ENCODE measurements at regions of chr4 and their contacts with region 1.

Region 1: DNA sequence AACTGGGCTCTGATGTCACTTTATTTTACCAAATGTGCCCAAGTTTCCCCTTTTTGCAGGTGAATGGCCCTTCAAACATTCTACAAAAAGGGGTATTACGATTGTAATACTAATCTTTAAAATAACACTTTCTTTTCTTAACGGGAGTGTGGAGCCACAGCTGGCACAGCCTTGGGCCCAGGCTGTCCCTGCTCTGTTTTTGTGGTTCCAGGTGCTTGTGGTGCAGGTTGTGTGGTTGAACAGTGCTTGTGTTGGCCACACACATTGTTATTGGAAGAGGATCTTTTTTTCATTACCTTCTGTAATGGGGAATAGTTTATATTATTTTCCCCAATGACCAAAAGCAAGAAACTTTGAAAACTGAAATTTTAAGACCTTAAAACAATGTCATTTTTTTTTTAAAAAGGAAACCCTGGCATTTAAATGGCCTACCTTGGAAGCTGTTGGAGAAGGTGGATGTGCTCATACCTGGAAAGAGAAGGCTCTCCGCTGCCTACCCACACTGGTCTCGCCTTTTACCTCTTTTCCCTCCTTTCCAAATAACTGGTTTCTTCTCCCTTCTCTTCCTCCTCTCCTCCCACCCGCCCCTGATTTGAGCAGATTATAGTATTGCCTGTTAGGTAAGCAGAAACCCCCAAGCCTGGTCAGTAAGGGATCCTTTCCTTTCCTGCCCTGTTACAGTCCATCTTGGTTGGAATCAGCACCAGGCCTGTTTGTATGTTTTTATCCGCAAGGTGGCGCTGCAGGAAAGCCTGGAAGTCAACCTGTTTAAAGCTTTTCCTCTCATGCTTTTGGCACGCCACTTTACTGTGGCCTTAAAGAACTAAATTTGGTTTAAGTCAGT is 28.6 kb downstream of the HADH start:
- DNase-seq: peak; percentile 61 to 90 (median 81)
- ATAC-seq: peak; percentile 88
- H3K4me3 ChIP-seq: no peak overlapping the region
- H3K4me3 Mint-ChIP-seq: no peak overlapping the region
- H3K27ac ChIP-seq: no peak overlapping the region
- H3K27ac Mint-ChIP-seq: no peak overlapping the region
- H3K4me1 ChIP-seq: peaks cover 4% of the 10 kb centered on the region
- H3K4me1 Mint-ChIP-seq: peaks cover 15% of the 10 kb centered on the region
- H3K27me3 ChIP-seq: no peaks in the 10 kb centered on the region
- H3K27me3 Mint-ChIP-seq: no peaks in the 10 kb centered on the region
- CTCF ChIP-seq: peak; percentile 82

Region 2: GRCh38 chr4:108045694-108046038 is 27.4 kb after region 1 on chr4:
- CTCF ChIA-PET with region 1: interaction called, 10 read pairs
- POLR2A ChIA-PET with region 1: no interaction called
- intact Hi-C with region 1: no loop called
- DNase-seq: peak in 3 of 9 experiments; percentile 36 to 69 (median 50)
- ATAC-seq: peak; percentile 27
- H3K4me3 ChIP-seq: no peak overlapping the region
- H3K4me3 Mint-ChIP-seq: no peak overlapping the region
- H3K27ac ChIP-seq: peak overlapping the region; percentile 16 to 17
- H3K27ac Mint-ChIP-seq: peak overlapping the region; percentile 81
- H3K4me1 ChIP-seq: peaks cover 69% of the 10 kb centered on the region
- H3K4me1 Mint-ChIP-seq: peaks cover 66% of the 10 kb centered on the region
- H3K27me3 ChIP-seq: no peaks in the 10 kb centered on the region
- H3K27me3 Mint-ChIP-seq: no peaks in the 10 kb centered on the region
- CTCF ChIP-seq: no peak

Region 3: GRCh38 chr4:108492816-108493595 is 474.7 kb after region 1 on chr4:
- CTCF ChIA-PET with region 1: interaction called, 5 read pairs
- POLR2A ChIA-PET with region 1: no interaction called
- intact Hi-C with region 1: loop called in 1 of 2 experiments (anchors 1 kb)
- DNase-seq: peak in 5 of 9 experiments; percentile 15 to 58 (median 38)
- ATAC-seq: no peak
- H3K4me3 ChIP-seq: no peak overlapping the region
- H3K4me3 Mint-ChIP-seq: no peak overlapping the region
- H3K27ac ChIP-seq: no peak overlapping the region
- H3K27ac Mint-ChIP-seq: no peak overlapping the region
- H3K4me1 ChIP-seq: no peaks in the 10 kb centered on the region
- H3K4me1 Mint-ChIP-seq: no peaks in the 10 kb centered on the region
- H3K27me3 ChIP-seq: no peaks in the 10 kb centered on the region
- H3K27me3 Mint-ChIP-seq: no peaks in the 10 kb centered on the region
- CTCF ChIP-seq: peak; percentile 19

Region 4: GRCh38 chr4:108560616-108561015 is 542.4 kb after region 1 on chr4:
- CTCF ChIA-PET with region 1: interaction called, 10 read pairs
- POLR2A ChIA-PET with region 1: no interaction called
- intact Hi-C with region 1: no loop called
- DNase-seq: no peak
- ATAC-seq: no peak
- H3K4me3 ChIP-seq: no peak overlapping the region
- H3K4me3 Mint-ChIP-seq: no peak overlapping the region
- H3K27ac ChIP-seq: no peak overlapping the region
- H3K27ac Mint-ChIP-seq: no peak overlapping the region
- H3K4me1 ChIP-seq: no peaks in the 10 kb centered on the region
- H3K4me1 Mint-ChIP-seq: peaks cover 8% of the 10 kb centered on the region
- H3K27me3 ChIP-seq: no peaks in the 10 kb centered on the region
- H3K27me3 Mint-ChIP-seq: no peaks in the 10 kb centered on the region
- CTCF ChIP-seq: no peak

Region 5: DNA sequence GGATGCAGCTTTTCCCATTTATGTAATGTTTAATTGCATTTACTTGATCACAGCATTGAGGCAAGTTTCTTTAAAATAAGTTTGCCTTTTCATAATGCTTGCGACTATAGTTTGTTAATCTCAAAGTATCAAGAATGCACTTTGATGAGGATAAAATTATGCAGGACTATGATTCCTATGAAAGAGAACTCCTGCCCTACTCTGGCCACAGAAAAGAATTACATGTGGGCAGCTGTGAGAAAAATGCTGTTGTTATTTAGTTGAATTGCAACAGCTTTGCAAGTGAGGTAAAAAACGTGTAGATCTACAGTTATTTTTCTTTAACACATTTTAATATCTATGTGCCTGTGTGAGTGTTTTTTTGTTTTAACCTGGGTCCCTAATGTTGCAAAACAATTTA is 619.6 kb after region 1 on chr4:
- CTCF ChIA-PET with region 1: no interaction called
- POLR2A ChIA-PET with region 1: no interaction called
- intact Hi-C with region 1: loop called in 1 of 2 experiments (anchors 2 kb)
- DNase-seq: no peak
- ATAC-seq: no peak
- H3K4me3 ChIP-seq: no peak overlapping the region
- H3K4me3 Mint-ChIP-seq: no peak overlapping the region
- H3K27ac ChIP-seq: no peak overlapping the region
- H3K27ac Mint-ChIP-seq: no peak overlapping the region
- H3K4me1 ChIP-seq: no peaks in the 10 kb centered on the region
- H3K4me1 Mint-ChIP-seq: no peaks in the 10 kb centered on the region
- H3K27me3 ChIP-seq: no peaks in the 10 kb centered on the region
- H3K27me3 Mint-ChIP-seq: no peaks in the 10 kb centered on the region
- CTCF ChIP-seq: no peak

Region 6: DNA sequence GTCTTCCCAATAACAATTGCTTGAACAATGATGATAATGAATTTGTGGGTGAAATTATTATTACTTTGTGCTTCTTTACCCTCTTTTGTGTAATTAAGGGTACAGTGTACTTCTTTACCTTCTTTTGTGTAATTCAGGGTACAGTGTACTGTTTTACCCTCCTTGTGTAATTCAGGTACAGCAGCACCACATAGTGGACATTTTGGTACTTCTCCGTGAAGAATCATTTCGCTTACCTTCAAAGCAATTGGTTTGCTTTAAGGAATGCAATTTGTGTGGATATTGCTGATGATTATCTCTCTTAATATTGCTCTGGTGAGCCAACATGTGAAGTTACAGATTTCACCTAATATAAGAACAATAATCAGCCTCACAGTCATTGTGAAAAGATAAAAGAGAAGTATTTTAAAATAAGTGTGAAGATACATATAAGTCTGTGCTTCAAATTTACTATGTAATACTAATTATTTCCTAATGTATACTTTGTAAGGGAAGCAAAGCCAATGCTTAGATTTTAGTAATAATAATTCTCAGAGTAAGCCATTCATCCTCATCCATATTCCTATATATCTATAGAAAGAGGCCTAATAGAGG is 1388.2 kb after region 1 on chr4:
- CTCF ChIA-PET with region 1: interaction called, 7 read pairs
- POLR2A ChIA-PET with region 1: no interaction called
- intact Hi-C with region 1: loop called in 1 of 2 experiments (anchors 1 kb)
- DNase-seq: peak in 4 of 9 experiments; percentile 26 to 73 (median 46)
- ATAC-seq: peak; percentile 57
- H3K4me3 ChIP-seq: no peak overlapping the region
- H3K4me3 Mint-ChIP-seq: no peak overlapping the region
- H3K27ac ChIP-seq: no peak overlapping the region
- H3K27ac Mint-ChIP-seq: no peak overlapping the region
- H3K4me1 ChIP-seq: no peaks in the 10 kb centered on the region
- H3K4me1 Mint-ChIP-seq: no peaks in the 10 kb centered on the region
- H3K27me3 ChIP-seq: no peaks in the 10 kb centered on the region
- H3K27me3 Mint-ChIP-seq: peaks cover 2% of the 10 kb centered on the region
- CTCF ChIP-seq: peak; percentile 72